Transverse colon (tissue), 4 donors: ENCODE measurements at regions of chr15 and their contacts with region 1.

Region 1: GRCh38 chr15:91807122-91807521 is 46.4 kb upstream of the SLCO3A1 start:
- DNase-seq: no peak
- H3K4me3 ChIP-seq: no peak overlapping the region
- H3K27ac ChIP-seq: no peak overlapping the region
- H3K4me1 ChIP-seq: no peaks in the 10 kb centered on the region
- H3K27me3 ChIP-seq: peaks cover 4% of the 10 kb centered on the region
- CTCF ChIP-seq: no peak
- EP300 ChIP-seq: no peak
- POLR2A ChIP-seq: no peak

Region 2: GRCh38 chr15:92077353-92078085 is 270.4 kb after region 1 on chr15:
- in situ Hi-C with region 1: no loop called
- intact Hi-C with region 1: no loop called
- DNase-seq: peak; percentile 75
- H3K4me3 ChIP-seq: no peak overlapping the region
- H3K27ac ChIP-seq: no peak overlapping the region
- H3K4me1 ChIP-seq: peaks cover 0 to 7% (median 0%) of the 10 kb centered on the region in 4 donors
- H3K27me3 ChIP-seq: no peaks in the 10 kb centered on the region
- CTCF ChIP-seq: peak; percentile 59 to 80 (median 68)
- EP300 ChIP-seq: no peak
- POLR2A ChIP-seq: no peak

Region 3: DNA sequence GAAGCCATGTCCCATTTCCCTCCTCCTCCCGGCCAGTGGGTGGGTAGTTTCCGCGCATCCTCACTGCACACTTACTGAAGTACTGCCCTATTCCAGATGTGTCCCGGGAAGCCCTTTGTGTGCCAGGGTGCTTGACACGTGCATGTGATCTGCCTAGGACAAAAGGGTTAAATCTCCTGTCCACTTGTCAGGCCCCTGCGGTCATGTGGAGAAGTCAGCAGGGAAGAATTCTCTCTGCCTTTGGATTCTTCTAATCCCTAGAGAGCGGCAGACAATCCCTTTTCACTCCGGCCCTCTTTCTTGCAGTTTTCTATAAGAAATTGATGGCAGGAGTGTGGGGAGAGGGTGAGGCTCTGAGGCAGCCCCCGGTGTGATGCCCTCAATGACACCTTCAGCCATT is 606.4 kb after region 1 on chr15:
- in situ Hi-C with region 1: no loop called
- intact Hi-C with region 1: loop called (anchors 5 kb)
- DNase-seq: no peak
- H3K4me3 ChIP-seq: no peak overlapping the region
- H3K27ac ChIP-seq: no peak overlapping the region
- H3K4me1 ChIP-seq: no peaks in the 10 kb centered on the region
- H3K27me3 ChIP-seq: no peaks in the 10 kb centered on the region
- CTCF ChIP-seq: no peak
- EP300 ChIP-seq: no peak
- POLR2A ChIP-seq: no peak